ENCODE measurements at regions of chr5 and their contacts with region 1.

Region 1: DNA sequence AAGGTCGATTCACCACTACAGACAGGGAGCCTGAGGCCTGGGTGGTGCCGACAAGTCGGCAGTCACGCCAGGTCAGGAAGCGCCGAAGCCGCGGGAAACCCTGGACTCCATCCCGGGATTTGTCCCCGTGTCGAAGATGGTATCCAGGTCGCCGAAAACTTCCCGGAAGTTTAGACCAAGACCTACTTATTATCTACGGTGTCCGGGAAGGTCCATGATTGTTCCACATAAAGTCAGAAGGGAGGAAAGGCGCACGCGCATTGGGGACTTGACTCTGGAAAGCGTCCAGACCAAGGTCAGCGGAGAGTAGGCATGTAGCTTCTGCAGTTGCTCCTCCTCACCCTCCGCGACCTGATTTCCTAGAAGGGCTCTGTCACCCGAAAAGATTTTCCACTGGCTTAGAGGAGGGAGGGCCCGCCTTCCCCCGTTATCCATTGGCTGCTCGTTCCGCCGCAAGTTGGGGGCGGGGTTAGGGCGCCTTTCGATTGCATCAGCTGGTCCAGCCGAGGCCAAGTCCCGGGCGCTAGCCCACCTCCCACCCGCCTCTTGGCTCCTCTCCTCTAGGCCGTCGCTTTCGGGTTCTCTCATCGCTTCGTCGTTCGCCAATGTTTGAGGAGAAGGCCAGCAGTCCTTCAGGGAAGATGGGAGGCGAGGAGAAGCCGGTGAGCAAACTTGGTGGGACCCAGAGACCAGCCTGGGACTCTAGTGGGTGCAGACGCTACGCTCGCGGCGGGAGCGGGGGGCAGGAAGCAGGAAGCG is at the start of gene TARS1:
- DNase-seq: peak; percentile 93
- H3K4me3 Mint-ChIP-seq: no peak within 1 kb of the TSS
- H3K27ac Mint-ChIP-seq: no peak within 1 kb of the TSS
- H3K4me1 Mint-ChIP-seq: peaks cover 27% of the 10 kb centered on the region
- H3K27me3 Mint-ChIP-seq: no peaks in the 10 kb centered on the region
- total RNA-seq, gene TARS1: 184 and 191 TPM in 2 replicates

Region 2: DNA sequence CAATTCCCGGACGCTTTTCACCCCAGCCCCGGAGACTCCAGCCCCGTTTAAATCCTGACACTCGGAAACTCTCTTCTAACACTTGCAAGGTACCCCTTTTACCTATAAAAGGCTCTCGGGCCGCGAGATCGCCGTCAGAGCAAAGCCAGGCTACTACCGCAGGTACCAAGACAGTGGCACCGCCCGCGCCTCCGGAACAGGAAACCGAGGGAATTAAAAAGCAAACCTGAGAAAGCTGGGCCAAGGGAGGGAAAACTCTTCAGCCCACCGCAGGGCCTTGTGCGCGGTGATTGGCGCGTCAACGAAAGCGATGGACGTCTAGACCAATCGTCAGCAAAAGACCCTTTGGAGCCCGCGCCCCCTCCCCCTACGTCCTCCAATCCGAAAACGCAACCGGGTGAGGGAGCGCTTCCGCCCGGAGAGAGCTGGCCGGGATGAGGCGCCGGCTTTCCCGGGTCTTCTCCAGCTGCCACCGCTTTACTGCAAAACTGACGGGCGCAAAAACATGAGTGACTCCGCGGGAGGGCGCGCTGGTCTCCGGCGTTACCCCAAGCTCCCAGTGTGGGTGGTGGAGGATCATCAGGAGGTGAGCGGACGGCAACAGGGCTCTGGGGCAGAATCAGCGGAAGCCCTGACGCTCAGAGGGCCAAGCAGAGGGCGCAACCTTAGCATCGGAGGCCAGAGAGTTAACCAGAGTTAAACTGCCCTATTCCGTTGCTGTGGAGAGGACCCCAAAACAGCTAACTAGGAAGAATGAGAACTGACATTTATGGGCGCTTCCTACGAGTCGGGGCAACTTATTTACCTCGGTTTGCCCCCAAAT is 1908.6 kb before region 1 on chr5 and contains the starts of genes C5orf22 and DROSHA:
- intact Hi-C with region 1: loop called (anchors 5 kb)
- DNase-seq: peak; percentile 89
- H3K4me3 Mint-ChIP-seq: peak within 1 kb of the TSS; percentile 100
- H3K27ac Mint-ChIP-seq: peak within 1 kb of the TSS; percentile 96
- H3K4me1 Mint-ChIP-seq: peaks cover 55% of the 10 kb centered on the region
- H3K27me3 Mint-ChIP-seq: no peaks in the 10 kb centered on the region
- total RNA-seq, gene C5orf22: 30.1 and 36.6 TPM in 2 replicates
- total RNA-seq, gene DROSHA: 74.0 and 87.6 TPM in 2 replicates

Region 3: GRCh38 chr5:32444431-32445286 is 996.0 kb before region 1 on chr5 and contains the start of gene ZFR:
- intact Hi-C with region 1: loop called (anchors 1 kb)
- DNase-seq: peak; percentile 94
- H3K4me3 Mint-ChIP-seq: peak within 1 kb of the TSS; percentile 97
- H3K27ac Mint-ChIP-seq: peak within 1 kb of the TSS; percentile 98
- H3K4me1 Mint-ChIP-seq: peaks cover 29% of the 10 kb centered on the region
- H3K27me3 Mint-ChIP-seq: peaks cover 12% of the 10 kb centered on the region
- total RNA-seq, gene ZFR: 67.7 and 70.8 TPM in 2 replicates

Region 4: GRCh38 chr5:33595308-33595707 is 154.6 kb after region 1 on chr5:
- intact Hi-C with region 1: loop called (anchors 5 kb)
- DNase-seq: no peak
- H3K4me3 Mint-ChIP-seq: no peak overlapping the region
- H3K27ac Mint-ChIP-seq: no peak overlapping the region
- H3K4me1 Mint-ChIP-seq: no peaks in the 10 kb centered on the region
- H3K27me3 Mint-ChIP-seq: peaks cover 6% of the 10 kb centered on the region

Region 5: DNA sequence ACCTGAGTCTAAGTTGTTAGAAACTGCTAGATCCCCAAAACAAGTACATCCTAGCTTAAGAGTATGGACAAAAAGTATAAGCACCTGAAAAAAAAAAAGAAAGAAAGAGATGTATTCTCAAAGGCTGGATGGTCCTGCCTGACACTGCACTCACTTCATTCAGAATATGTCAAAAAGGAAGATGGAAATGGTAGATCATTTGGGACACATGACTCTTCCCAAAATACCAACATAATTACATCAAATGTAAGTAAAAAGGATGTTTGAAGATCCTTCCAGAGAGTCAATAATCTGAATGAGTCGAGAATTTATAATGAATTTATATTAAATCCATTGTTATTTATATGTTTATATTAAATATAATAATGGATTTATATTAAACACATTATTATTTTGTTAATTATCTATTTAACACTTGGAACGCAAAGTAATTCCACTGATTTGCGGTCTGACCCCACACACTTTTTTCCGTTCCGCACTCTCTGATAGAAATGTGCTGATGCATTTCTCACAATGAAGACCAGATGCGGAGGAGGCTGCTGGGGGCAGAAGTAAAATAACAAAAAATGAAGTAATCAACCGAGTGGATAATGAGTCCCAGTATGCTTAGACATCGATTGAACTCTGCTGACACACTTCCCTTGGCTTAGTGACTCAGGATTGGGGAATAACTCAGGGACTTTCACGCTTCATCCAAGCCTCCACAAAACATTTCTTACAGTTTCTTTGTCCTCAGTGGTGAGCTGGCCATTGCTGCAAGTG is 249.9 kb after region 1 on chr5:
- intact Hi-C with region 1: no loop called
- DNase-seq: no peak
- H3K4me3 Mint-ChIP-seq: no peak overlapping the region
- H3K27ac Mint-ChIP-seq: no peak overlapping the region
- H3K4me1 Mint-ChIP-seq: no peaks in the 10 kb centered on the region
- H3K27me3 Mint-ChIP-seq: no peaks in the 10 kb centered on the region

Region 6: GRCh38 chr5:33969572-33970452 is 529.2 kb after region 1 on chr5:
- intact Hi-C with region 1: loop called (anchors 1 kb)
- DNase-seq: no peak
- H3K4me3 Mint-ChIP-seq: no peak overlapping the region
- H3K27ac Mint-ChIP-seq: no peak overlapping the region
- H3K4me1 Mint-ChIP-seq: peaks cover 18% of the 10 kb centered on the region
- H3K27me3 Mint-ChIP-seq: no peaks in the 10 kb centered on the region

Region 7: DNA sequence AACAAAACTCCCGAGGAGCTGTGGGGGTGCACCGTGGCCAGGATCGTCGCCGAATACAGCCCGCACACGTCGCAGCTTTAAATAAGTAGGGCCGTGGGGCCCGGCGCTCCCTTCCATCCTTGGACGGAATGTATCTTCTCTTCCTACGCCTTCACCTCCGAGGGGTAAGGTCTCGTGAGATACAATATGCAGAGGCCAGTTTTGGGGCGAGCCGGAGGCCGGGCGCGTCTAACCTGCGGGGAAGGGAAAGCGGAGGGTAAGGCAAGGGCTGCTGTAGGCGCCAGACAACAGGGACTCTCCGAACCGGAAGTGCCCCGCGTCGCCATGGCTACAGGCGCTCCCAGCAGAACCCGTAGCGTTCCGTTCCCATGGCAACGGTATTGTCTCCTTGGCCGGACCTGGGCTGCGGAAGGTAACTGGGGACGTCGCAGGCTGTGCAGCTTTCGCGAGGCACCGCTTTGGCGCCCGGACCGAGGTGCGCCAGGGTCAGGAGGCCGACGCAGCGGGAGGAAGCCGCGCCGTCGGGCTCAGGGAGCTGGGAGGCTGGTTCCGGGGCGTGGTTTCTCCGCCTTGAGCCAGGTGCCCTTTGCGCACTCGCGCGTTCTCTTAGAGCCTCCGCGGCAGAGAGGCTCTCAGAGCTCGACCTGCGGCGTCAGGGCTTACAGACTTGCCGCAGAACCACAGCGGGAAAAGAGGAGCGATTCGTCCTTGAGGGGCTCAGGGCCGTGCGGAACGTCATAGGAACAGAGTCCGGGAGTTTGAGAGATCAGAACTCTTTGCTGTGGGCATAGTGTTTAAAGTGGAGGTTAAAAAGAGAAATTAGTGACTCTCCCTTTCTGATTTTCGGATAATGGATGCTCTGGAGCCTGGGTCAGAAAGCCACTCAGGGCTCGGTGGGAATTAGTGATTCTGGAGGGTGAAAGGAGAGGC is 1398.4 kb after region 1 on chr5 and contains the start of gene TTC23L:
- intact Hi-C with region 1: loop called (anchors 1 kb)
- DNase-seq: peak; percentile 88
- H3K4me3 Mint-ChIP-seq: peak within 1 kb of the TSS; percentile 93
- H3K27ac Mint-ChIP-seq: peak within 1 kb of the TSS; percentile 81
- H3K4me1 Mint-ChIP-seq: peaks cover 15% of the 10 kb centered on the region
- H3K27me3 Mint-ChIP-seq: peaks cover 11% of the 10 kb centered on the region
- total RNA-seq, gene TTC23L: not detected in 2 replicates

Measured in activated T-helper 1 cell treated with anti-CD3 and anti-CD28 coated beads, Interleukin-12 subunit alpha, Interleukin-12 subunit beta, Interleukin-2, Interleukin-4 antibody, amounts not matched to agents 30 ng/mL and 10 ng/mL and 1 ng/mL, durations not matched to agents 14 hours and 24 hours and 36 hours (primary cell).